ENCODE measurements at regions of chr16 and their contacts with region 1.

Region 1: DNA sequence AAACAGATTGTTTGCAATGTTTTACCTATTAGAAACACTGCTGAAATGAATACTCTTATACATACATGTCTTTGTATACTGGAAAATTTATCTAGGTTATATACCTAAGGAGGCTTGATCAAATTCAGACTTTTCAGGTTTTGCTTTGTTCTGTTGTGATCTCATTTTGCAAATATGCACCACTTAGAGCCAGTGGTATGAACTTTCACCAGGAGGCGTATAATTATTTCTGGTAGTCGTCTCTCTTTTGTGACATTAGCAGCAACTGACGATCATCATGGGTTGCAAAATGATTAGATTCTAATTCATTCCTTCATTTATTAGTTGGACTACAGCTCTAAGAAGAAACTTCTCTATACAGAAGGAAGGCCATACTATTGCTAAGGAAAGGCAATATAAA is 26.9 kb downstream of the AP1G1 start:
- DNase-seq: no peak
- H3K4me3 ChIP-seq: no peak overlapping the region
- H3K27ac ChIP-seq: no peak overlapping the region
- H3K4me1 ChIP-seq: no peaks in the 10 kb centered on the region
- H3K27me3 ChIP-seq: no peaks in the 10 kb centered on the region
- CTCF ChIP-seq: no peak
- POLR2A ChIP-seq: no peak

Region 2: GRCh38 chr16:71767060-71767900 is 14.5 kb before region 1 on chr16:
- CTCF ChIA-PET with region 1: interaction called, 5 read pairs
- POLR2A ChIA-PET with region 1: interaction called, 6 read pairs
- dilution Hi-C with region 1: no loop called
- intact Hi-C with region 1: loop called (anchors 2 kb)
- DNase-seq: peak; percentile 14
- H3K4me3 ChIP-seq: no peak overlapping the region
- H3K27ac ChIP-seq: no peak overlapping the region
- H3K4me1 ChIP-seq: peaks cover 22% of the 10 kb centered on the region
- H3K27me3 ChIP-seq: no peaks in the 10 kb centered on the region
- CTCF ChIP-seq: no peak
- POLR2A ChIP-seq: no peak

Region 3: DNA sequence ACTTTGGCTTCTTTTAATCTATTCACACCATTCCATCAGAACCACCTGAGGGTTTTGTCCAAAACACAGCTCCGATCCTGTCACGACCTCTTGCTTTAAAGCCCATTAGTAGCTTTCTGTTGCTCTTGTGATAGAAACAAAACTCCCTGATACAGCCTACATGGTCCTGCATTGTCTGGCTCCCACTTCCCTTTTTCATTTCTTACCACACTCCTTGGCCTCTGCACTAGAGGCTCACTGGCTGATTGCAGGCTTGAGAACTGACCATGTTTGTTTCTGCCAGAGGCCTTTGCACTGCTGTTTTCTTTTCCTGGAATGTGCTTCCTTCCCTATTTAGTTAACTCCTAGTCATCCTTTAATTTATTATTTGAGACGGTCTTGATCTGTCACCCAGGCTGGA is 137.3 kb after region 1 on chr16:
- CTCF ChIA-PET with region 1: no interaction called
- POLR2A ChIA-PET with region 1: no interaction called
- dilution Hi-C with region 1: no loop called
- intact Hi-C with region 1: no loop called
- DNase-seq: no peak
- H3K4me3 ChIP-seq: no peak overlapping the region
- H3K27ac ChIP-seq: no peak overlapping the region
- H3K4me1 ChIP-seq: peaks cover 31% of the 10 kb centered on the region
- H3K27me3 ChIP-seq: no peaks in the 10 kb centered on the region
- CTCF ChIP-seq: no peak
- POLR2A ChIP-seq: no peak